ENCODE measurements at regions of chr10 and their contacts with region 1.

Region 1: GRCh38 chr10:6445501-6446316 is 134.4 kb downstream of the PRKCQ start:
- DNase-seq: peak; percentile 25 to 60
- ATAC-seq: peak; percentile 64 to 77; a peak in 5 of 6 replicates
- H3K4me3 ChIP-seq: no peak overlapping the region
- H3K27ac ChIP-seq: no peak overlapping the region
- H3K4me1 ChIP-seq: no peaks in the 10 kb centered on the region
- CTCF ChIP-seq: peak; percentile 80
- EP300 ChIP-seq: no peak
- POLR2A ChIP-seq: no peak
- RAD21 ChIP-seq: peak; percentile 65 to 70

Region 2: GRCh38 chr10:6328699-6329423 is 116.8 kb before region 1 on chr10:
- CTCF ChIA-PET with region 1: no interaction called
- POLR2A ChIA-PET with region 1: no interaction called
- DNase-seq: no peak
- ATAC-seq: no peak
- H3K4me3 ChIP-seq: no peak overlapping the region
- H3K27ac ChIP-seq: no peak overlapping the region; a peak in 1 of 6 replicates
- H3K4me1 ChIP-seq: no peaks in the 10 kb centered on the region
- CTCF ChIP-seq: no peak
- EP300 ChIP-seq: no peak
- POLR2A ChIP-seq: no peak
- RAD21 ChIP-seq: no peak

Region 3: GRCh38 chr10:6431861-6432260 is 13.8 kb before region 1 on chr10:
- CTCF ChIA-PET with region 1: interaction called, 18 read pairs
- POLR2A ChIA-PET with region 1: no interaction called
- DNase-seq: no peak
- ATAC-seq: no peak; a peak in 1 of 6 replicates
- H3K4me3 ChIP-seq: no peak overlapping the region
- H3K27ac ChIP-seq: no peak overlapping the region
- H3K4me1 ChIP-seq: no peaks in the 10 kb centered on the region; the same call in 2 of the 3 replicates
- CTCF ChIP-seq: no peak
- EP300 ChIP-seq: no peak
- POLR2A ChIP-seq: no peak
- RAD21 ChIP-seq: no peak

Region 4: GRCh38 chr10:6470894-6471618 is 25.3 kb after region 1 on chr10:
- CTCF ChIA-PET with region 1: no interaction called
- POLR2A ChIA-PET with region 1: no interaction called
- DNase-seq: no peak
- ATAC-seq: no peak
- H3K4me3 ChIP-seq: no peak overlapping the region
- H3K27ac ChIP-seq: no peak overlapping the region
- H3K4me1 ChIP-seq: no peaks in the 10 kb centered on the region
- CTCF ChIP-seq: no peak
- EP300 ChIP-seq: no peak
- POLR2A ChIP-seq: no peak
- RAD21 ChIP-seq: no peak